GM13977 (cell line): ENCODE measurements at regions of chr17 and their contacts with region 1.

Region 1: DNA sequence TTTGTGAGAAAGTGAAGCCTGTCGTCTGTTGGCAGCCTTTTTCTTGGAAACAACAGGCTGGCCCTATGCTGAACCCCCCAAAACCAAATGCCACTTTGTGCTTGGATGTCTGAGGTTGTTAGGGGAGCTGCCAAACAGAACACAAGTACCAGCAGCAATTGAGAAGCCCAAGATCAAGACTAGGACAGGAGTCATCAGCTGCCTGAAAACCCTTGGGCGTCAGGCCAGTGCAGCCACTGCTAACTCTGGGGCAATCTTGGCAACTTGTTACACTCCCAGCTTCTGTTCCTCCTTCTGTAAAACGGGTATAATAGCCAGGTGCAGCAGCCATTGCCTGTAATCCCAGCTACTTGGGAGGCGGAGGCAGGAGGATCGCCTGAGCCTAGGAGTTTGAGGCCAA is 9.3 kb upstream of the LRRC59 start:
- DNase-seq: no peak
- CTCF ChIP-seq: no peak

Region 2: DNA sequence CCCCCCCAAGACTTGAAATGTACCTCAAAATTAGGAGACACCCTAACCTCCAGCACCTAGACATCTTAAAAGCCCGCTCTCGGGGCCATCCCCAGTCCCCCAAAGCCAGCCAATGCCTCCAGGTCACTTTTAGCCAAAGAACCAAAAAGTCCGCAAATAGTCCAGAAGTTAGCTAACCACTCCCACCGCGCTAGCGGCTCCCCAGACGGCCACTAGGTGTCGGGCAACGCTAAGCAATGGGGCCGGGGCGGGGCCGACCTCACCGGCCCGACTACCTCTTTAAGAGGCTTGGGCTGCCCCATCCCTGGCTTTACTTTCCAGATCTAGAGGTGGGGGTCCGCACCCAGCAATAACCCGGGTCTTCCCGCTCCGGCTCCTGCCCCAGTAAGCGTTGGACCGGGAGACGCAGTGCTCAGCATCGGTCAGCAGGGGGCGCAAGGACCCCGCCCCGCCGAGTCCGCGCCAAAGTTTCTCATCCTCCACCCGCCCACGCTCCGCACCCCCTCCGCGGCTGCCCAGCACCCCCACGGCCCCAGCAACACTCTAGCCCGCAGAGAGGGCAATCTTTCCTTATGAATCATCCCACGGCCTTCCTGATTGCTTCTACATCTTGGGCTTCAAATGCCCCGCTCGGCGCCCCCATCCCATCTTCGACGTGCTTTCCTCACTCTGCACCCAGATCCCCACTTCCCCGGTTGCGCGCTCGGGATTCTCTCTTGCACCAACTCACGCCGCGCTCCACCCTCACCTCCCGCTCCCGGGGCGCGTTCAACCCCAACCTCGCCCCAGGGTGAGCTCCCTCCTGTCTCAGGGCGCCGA is 205.9 kb before region 1 on chr17:
- in situ Hi-C with region 1: no loop called
- DNase-seq: peak; percentile 95
- CTCF ChIP-seq: peak; percentile 76

Region 3: GRCh38 chr17:50348522-50349242 is 57.9 kb before region 1 on chr17:
- in situ Hi-C with region 1: no loop called
- DNase-seq: no peak
- CTCF ChIP-seq: no peak

Region 4: DNA sequence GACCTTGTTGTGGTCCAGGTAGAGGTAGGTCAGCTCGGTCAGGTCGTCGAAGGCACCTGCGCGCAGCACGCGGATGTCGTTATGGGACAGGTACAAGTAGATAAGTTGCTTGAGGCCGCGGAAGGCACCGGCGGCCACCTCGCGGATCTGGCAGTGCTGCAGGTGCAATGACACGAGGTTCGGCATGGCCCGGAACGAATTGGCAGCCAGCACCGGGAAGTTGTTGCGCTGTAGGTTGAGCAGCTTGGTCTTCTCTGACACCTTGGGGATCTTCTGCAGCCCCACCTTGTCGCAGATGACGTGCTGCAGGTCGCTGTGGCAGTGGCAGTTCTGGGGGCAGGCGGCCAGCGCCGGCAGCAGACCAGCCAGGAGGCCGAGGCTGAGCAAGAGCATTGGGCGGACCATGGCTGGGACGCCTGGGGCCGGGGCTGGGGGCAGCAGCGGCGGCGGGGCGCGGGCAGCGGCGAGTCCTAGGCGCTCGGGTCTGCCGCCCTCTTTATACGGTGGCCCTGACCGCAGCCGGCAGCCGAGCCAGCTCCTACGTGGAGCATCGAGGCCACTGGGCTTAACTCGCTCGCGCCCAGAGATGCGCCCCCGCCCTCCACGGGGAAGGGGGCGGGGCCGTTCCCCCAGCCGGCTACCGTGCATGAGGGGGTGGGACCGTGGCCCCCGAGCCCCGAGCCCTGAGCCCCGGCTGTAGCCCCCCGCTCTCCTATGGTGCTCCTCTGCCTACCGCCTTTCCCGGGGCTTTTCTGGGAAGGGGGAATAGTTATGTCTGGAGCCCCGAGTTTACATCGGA is 62.0 kb after region 1 on chr17 and contains the start of gene CHAD:
- in situ Hi-C with region 1: loop called (anchors 10 kb)
- DNase-seq: peak; percentile 52
- CTCF ChIP-seq: no peak